Transverse colon (tissue), 4 donors: ENCODE measurements at regions of chr20 and their contacts with region 1.

Region 1: GRCh38 chr20:19067986-19068385 is 144.5 kb upstream of the SLC24A3 start:
- DNase-seq: no peak
- H3K4me3 ChIP-seq: no peak overlapping the region
- H3K27ac ChIP-seq: no peak overlapping the region
- H3K4me1 ChIP-seq: no peaks in the 10 kb centered on the region
- H3K27me3 ChIP-seq: no peaks in the 10 kb centered on the region
- CTCF ChIP-seq: no peak
- EP300 ChIP-seq: no peak
- POLR2A ChIP-seq: no peak

Region 2: GRCh38 chr20:19047661-19048296 is 20.2 kb before region 1 on chr20:
- in situ Hi-C with region 1: no loop called
- intact Hi-C with region 1: loop called (anchors 2 kb)
- DNase-seq: peak; percentile 84
- H3K4me3 ChIP-seq: no peak overlapping the region
- H3K27ac ChIP-seq: peak overlapping the region; percentile 40 to 78 (median 77)
- H3K4me1 ChIP-seq: peaks cover 0 to 29% (median 23%) of the 10 kb centered on the region in 4 donors
- H3K27me3 ChIP-seq: no peaks in the 10 kb centered on the region
- CTCF ChIP-seq: no peak
- EP300 ChIP-seq: no peak
- POLR2A ChIP-seq: no peak